ENCODE measurements at regions of chr1 and their contacts with region 1.

Region 1: GRCh38 chr1:246139745-246140182 is 367.3 kb downstream of the SMYD3 start:
- DNase-seq: peak; percentile 89
- H3K4me3 Mint-ChIP-seq: no peak overlapping the region
- H3K27ac Mint-ChIP-seq: peak overlapping the region; percentile 66
- H3K4me1 Mint-ChIP-seq: peaks cover 39% of the 10 kb centered on the region
- H3K27me3 Mint-ChIP-seq: no peaks in the 10 kb centered on the region
- CTCF ChIP-seq: no peak

Region 2: DNA sequence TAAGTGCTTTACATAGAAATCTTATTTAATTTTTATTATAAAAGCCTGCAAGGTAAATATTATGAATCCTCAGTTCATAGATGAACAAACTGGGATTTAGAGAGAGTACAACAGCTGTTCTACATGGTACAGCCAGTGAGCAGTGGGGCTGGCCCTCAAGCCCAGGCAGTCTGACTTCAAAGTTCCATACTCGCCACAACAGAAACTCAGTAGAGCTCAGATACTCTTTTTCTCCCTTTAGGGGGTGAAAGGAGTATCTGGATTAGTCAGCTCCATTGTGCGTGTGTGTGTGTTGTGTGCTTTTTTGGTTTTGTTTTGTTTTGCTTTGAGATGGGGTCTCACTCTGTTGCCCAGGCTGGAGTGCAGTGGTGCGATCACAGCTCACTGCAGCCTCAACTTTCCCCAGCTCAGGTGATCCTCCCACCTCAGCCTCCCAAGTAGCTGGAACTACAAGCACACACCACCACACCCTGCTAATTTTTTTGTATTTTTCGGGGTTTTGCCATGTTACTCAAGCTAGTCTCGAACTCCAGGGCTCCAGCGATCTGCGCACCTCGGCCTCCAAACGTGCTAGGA is 11.2 kb before region 1 on chr1:
- CTCF ChIA-PET with region 1: interaction called, 6 read pairs
- POLR2A ChIA-PET with region 1: interaction called, 14 read pairs
- intact Hi-C with region 1: no loop called
- DNase-seq: no peak
- H3K4me3 Mint-ChIP-seq: no peak overlapping the region
- H3K27ac Mint-ChIP-seq: no peak overlapping the region
- H3K4me1 Mint-ChIP-seq: no peaks in the 10 kb centered on the region
- H3K27me3 Mint-ChIP-seq: no peaks in the 10 kb centered on the region
- CTCF ChIP-seq: no peak

Region 3: GRCh38 chr1:246161626-246162025 is 21.9 kb after region 1 on chr1:
- CTCF ChIA-PET with region 1: interaction called, 6 read pairs
- POLR2A ChIA-PET with region 1: interaction called, 19 read pairs
- intact Hi-C with region 1: loop called (anchors 1 kb)
- DNase-seq: peak; percentile 98
- H3K4me3 Mint-ChIP-seq: no peak overlapping the region
- H3K27ac Mint-ChIP-seq: no peak overlapping the region
- H3K4me1 Mint-ChIP-seq: peaks cover 44% of the 10 kb centered on the region
- H3K27me3 Mint-ChIP-seq: no peaks in the 10 kb centered on the region
- CTCF ChIP-seq: no peak

Measured in MCF 10A (cell line).